Activated CD8-positive, alpha-beta T cell treated with anti-CD3 and anti-CD28 coated beads for 36 hours (primary cell): ENCODE measurements at regions of chr6 and their contacts with region 1.

Region 1: DNA sequence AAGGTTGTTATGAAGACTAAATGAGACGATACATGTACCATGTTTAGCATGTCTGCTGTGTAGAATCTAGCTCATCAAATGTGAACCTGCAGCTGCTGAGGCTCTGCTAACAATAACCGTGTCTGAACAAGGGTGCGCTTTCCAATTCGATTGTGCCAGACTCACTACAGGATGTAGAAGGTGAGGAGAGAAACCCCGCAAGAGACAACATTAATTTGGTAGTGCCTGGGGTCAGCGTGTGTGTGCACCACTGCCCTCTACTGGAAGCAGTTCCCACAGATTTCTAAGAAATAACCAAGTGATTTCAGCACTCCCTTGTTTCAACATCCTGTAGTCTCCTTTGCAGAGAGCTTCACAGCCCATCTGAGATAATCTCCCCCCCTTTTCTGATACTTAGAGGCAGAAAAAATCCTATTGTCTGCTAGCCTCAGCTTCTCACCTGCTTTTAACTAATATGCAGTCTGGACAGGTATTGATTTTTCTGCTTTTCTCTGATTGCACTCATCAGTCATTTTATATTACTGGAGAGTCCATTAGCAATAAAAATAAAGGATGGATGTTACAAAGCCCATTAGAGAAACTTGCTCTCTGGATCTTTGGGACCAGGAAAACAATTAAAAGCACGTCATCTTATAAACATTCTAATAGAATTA is 96.7 kb upstream of the BACH2 start:
- DNase-seq: peak; percentile 90
- ATAC-seq: peak; percentile 55
- H3K4me3 Mint-ChIP-seq: no peak overlapping the region
- H3K27ac Mint-ChIP-seq: peak overlapping the region; percentile 40
- H3K4me1 Mint-ChIP-seq: peaks cover 63% of the 10 kb centered on the region
- H3K27me3 Mint-ChIP-seq: no peaks in the 10 kb centered on the region
- CTCF ChIP-seq: peak; percentile 77

Region 2: DNA sequence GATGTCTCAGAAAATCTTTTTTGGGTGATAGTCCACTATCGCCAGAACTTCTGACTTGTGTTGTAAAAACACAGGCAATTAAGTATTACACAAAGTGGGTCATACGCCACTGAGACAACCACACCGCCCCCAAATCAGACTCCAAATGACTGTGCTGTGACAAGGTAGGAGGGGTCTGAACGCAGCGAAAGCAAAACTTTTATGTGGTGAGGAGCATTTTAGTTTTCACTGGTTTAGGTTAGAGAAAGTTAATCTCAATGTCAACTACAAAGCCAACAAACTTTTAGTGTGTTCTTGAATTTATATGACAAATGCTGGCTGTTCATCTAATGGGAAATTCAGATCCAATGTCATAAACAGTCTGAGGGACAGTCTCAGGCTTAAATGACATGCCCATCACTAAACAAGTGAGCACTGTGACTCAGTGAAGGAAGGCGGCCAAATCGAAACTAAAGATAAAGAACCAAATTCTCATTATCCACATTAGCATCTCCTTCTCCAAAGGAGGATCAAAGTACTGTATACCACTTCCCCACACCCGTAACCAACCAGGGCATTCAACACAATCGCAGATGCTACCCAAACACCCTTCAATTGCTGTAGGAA is 312.4 kb before region 1 on chr6:
- CTCF ChIA-PET with region 1: interaction called, 7 read pairs
- POLR2A ChIA-PET with region 1: no interaction called
- intact Hi-C with region 1: loop called (anchors 5 kb)
- DNase-seq: peak; percentile 96
- ATAC-seq: peak; percentile 62
- H3K4me3 Mint-ChIP-seq: peak overlapping the region; percentile 96
- H3K27ac Mint-ChIP-seq: peak overlapping the region; percentile 99
- H3K4me1 Mint-ChIP-seq: peaks cover 72% of the 10 kb centered on the region
- H3K27me3 Mint-ChIP-seq: no peaks in the 10 kb centered on the region
- CTCF ChIP-seq: no peak

Region 3: DNA sequence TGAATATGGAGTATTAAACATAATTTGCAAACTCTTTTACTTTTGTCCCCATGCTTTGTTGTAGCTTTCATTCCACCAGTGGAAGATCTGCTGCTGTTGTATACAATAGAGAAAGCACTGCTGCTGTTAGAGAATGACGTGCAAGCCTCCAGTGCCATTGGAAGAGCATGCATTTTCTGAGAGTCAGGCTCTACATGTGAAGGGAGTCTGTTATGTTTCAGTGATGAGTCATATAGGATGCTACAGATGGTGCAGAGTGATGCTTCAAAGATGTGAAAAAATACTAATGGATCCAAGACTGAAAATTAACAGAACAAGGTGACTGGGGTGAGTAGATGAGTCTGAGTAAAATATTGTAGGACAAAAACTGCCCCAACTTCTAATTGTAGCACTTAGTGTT is 74.3 kb before region 1 on chr6:
- CTCF ChIA-PET with region 1: interaction called, 6 read pairs
- POLR2A ChIA-PET with region 1: interaction called, 4 read pairs
- intact Hi-C with region 1: loop called (anchors 2 kb)
- DNase-seq: peak; percentile 23
- ATAC-seq: peak; percentile 82
- H3K4me3 Mint-ChIP-seq: no peak overlapping the region
- H3K27ac Mint-ChIP-seq: peak overlapping the region; percentile 37
- H3K4me1 Mint-ChIP-seq: peaks cover 32% of the 10 kb centered on the region
- H3K27me3 Mint-ChIP-seq: no peaks in the 10 kb centered on the region
- CTCF ChIP-seq: no peak

Region 4: DNA sequence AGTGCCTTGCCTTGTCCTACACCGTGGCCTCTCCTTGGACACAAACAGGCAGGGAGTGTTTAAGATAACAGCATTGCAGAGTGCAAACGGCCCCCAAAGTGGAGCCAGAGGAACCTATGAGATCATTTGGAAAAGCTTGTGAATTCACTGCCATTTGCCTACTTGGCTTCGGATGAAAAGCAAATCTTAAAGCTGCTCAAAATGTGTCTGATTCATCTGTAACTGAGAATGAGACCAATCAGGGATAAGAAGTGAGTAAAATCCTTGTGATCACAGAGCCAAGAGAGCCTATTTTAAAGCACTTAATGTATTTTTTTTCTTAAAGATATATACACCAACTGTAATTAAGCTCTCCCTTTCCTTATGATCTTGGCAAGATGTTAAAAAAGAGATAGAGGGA is 31.0 kb before region 1 on chr6:
- CTCF ChIA-PET with region 1: no interaction called
- POLR2A ChIA-PET with region 1: no interaction called
- intact Hi-C with region 1: no loop called
- DNase-seq: no peak
- ATAC-seq: no peak
- H3K4me3 Mint-ChIP-seq: no peak overlapping the region
- H3K27ac Mint-ChIP-seq: no peak overlapping the region
- H3K4me1 Mint-ChIP-seq: peaks cover 10% of the 10 kb centered on the region
- H3K27me3 Mint-ChIP-seq: no peaks in the 10 kb centered on the region
- CTCF ChIP-seq: no peak

Region 5: DNA sequence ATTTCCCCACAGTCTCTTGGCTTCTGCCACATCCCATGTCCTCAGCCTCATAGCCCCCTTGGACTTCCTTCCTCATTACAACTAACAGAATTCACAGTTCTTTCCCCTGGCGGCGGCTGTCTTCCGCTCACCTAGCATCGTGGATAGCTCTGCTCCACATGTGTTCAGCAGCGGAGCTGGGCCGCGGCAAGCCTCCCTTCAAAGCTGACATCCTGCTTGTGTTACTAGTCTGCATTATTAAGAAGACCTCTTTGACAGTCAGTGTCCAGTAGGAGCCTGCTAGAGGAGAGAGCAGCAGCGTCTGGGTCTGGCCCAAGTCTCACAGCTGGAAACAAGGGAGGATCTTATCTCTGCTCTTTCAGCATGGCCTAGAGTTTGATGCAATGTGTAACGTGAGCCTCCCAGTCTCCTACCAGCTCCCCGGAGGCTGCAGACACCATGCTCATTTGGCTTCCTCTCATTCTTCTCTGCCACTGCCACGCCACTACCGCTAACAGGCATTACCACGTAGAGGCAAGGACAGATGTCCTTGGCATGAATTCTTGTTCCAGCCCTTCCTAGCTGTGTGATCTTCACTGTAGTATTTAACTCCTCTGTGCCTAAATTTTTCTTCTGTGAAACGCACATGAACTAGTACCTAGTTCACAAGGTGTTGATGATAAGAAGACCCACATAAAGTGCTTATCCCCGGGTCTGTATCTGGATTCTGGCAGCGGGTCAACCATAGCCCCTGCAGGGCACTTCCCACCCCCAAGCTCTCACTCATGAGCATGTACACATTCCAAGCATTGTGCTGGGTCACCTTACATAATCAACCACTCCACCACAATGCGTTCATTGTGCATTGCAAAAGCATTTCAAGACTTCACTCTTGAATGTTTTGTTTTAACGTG is 10.4 kb after region 1 on chr6:
- CTCF ChIA-PET with region 1: interaction called, 18 read pairs
- POLR2A ChIA-PET with region 1: interaction called, 3 read pairs
- intact Hi-C with region 1: no loop called
- DNase-seq: no peak
- ATAC-seq: no peak
- H3K4me3 Mint-ChIP-seq: no peak overlapping the region
- H3K27ac Mint-ChIP-seq: peak overlapping the region; percentile 79
- H3K4me1 Mint-ChIP-seq: peaks cover 65% of the 10 kb centered on the region
- H3K27me3 Mint-ChIP-seq: no peaks in the 10 kb centered on the region
- CTCF ChIP-seq: no peak

Region 6: GRCh38 chr6:90445533-90446108 is 52.3 kb after region 1 on chr6:
- CTCF ChIA-PET with region 1: interaction called, 7 read pairs
- POLR2A ChIA-PET with region 1: no interaction called
- intact Hi-C with region 1: loop called (anchors 1 kb)
- DNase-seq: peak; percentile 68
- ATAC-seq: peak; percentile 88
- H3K4me3 Mint-ChIP-seq: peak overlapping the region; percentile 25
- H3K27ac Mint-ChIP-seq: peak overlapping the region; percentile 91
- H3K4me1 Mint-ChIP-seq: peaks cover 38% of the 10 kb centered on the region
- H3K27me3 Mint-ChIP-seq: no peaks in the 10 kb centered on the region
- CTCF ChIP-seq: no peak

Region 7: GRCh38 chr6:90472744-90473143 is 79.4 kb after region 1 on chr6:
- CTCF ChIA-PET with region 1: interaction called, 113 read pairs
- POLR2A ChIA-PET with region 1: interaction called, 12 read pairs
- intact Hi-C with region 1: loop called (anchors 2 kb)
- DNase-seq: peak; percentile 64
- ATAC-seq: peak; percentile 18
- H3K4me3 Mint-ChIP-seq: peak overlapping the region; percentile 7
- H3K27ac Mint-ChIP-seq: peak overlapping the region; percentile 88
- H3K4me1 Mint-ChIP-seq: peaks cover 78% of the 10 kb centered on the region
- H3K27me3 Mint-ChIP-seq: no peaks in the 10 kb centered on the region
- CTCF ChIP-seq: no peak